Right cardiac atrium (tissue), 5 donors: ENCODE measurements at regions of chr3 and their contacts with region 1.

Region 1: DNA sequence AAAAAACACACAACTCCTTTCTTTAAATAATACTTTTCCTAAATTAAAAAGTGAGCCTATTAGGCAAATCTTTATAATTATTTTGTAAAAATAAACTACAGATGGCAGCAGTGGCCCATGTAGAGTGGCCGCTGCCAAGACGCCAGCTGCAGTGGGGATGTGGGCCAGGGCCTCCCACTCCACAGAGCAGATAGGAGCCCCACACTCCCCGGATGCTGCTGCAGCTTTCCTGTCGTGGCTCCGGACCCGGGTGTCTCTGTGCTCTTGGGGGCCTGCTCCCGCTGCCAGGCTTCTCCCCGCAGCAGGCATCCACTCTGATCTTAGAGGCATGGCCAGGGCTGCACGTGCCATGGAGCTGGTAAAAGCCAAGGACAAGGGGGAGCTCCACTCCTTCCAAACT is 67.5 kb downstream of the PROS1 start:
- DNase-seq: peak; percentile 61 to 89 (median 86)
- ATAC-seq: peak; percentile 77 to 88
- H3K4me3 ChIP-seq: no peak overlapping the region
- H3K27ac ChIP-seq: peak overlapping the region; percentile 29
- H3K4me1 ChIP-seq: no peaks in the 10 kb centered on the region
- H3K27me3 ChIP-seq: no peaks in the 10 kb centered on the region

Region 2: GRCh38 chr3:93855406-93855805 is 50.8 kb before region 1 on chr3:
- intact Hi-C with region 1: no loop called
- DNase-seq: no peak
- ATAC-seq: no peak
- H3K4me3 ChIP-seq: no peak overlapping the region
- H3K27ac ChIP-seq: no peak overlapping the region
- H3K4me1 ChIP-seq: no peaks in the 10 kb centered on the region
- H3K27me3 ChIP-seq: no peaks in the 10 kb centered on the region

Region 3: DNA sequence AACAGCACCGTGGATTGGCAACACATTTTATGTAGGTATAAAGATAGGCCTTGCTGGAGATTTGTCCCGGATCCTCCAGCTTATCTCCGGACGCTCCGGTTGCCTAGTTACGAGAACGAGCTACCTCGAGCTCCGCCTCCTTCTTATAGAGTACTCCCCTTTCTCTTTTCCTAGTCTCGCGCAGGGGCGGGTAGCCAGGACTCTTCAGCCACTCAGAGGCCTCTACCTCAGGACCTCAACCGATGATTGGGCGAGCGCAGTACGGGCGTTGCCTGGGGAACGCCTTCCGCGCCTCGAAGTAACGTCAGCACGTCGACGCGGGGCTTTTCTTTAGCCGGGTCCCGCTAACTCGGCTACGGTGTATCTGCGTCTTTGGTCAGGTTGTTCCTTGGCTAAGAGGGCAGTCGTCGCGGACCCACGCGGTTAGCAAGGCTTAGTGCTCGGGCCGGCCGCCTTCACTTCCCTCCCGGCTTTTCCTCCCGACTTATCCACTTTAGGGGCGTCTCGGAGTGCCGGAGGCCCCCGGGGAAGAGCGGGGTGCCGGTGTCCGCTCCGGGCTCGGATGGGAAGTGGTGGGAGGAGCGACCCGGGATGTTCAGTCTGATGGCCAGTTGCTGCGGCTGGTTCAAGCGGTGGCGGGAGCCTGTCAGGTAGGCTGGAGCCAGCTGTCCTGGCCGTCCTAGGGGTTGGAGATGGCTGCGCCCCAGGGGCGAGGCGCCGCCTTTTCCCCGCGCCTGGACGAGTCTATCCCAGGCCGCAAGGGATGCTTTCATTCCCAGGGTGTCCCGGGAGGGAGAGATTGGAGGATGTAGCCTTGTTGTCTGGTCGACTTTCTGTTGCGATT is 73.8 kb after region 1 on chr3 and contains the start of gene ARL13B:
- intact Hi-C with region 1: loop called in 1 of 4 experiments (anchors 10 kb)
- DNase-seq: peak; percentile 99
- ATAC-seq: peak; percentile 100
- H3K4me3 ChIP-seq: peak within 1 kb of the TSS; percentile 79
- H3K27ac ChIP-seq: peak within 1 kb of the TSS; percentile 95
- H3K4me1 ChIP-seq: no peaks in the 10 kb centered on the region
- H3K27me3 ChIP-seq: no peaks in the 10 kb centered on the region
- total RNA-seq, gene ARL13B: 5.9 to 10.1 (median 7.6) TPM

Region 4: DNA sequence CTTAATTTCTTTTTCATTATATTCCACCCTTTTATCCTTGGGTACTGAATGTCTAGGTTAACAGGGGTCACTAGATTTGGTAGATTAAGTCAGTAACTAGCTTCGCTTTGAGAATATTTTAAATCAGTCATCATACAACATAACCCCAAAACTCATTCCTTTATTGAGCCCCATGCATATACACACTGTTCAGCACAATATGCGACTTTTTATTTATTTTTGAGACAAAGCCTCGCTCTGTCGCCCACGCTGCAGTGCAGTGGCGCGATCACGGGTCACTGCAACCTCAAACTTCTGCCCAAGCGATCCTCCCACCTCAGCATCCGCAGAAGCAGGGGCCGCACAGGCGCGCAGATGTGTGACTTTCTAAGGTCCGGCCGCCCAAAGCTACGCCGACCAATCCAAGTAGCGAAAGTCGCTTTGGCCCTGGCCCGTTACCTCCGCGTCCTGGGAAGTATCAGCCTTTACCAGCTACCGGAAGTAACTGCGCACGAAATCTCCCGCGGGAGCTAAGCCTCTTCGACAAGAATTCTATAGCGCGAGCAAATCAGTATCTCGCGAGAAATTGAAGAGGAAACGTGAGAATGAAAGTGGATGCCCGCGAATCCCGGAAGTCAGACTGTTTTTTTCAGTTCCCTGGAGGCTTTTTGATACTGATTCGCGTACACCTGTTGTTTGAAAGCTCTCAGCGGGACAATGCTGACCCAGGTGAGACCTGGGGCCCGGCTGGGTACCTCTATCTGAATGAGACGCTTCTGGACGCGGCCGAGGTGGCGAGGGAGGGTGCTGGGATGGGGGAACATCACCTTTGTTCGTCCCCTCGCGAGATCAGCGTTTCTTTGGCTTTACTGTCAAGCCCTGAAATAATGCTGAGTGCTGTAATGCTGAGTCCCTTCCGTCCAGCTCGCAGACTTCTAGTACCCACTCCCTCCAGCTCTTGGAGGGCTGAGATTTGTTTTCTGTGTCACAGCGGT is 156.5 kb after region 1 on chr3 and contains the starts of genes DHFR2 and NSUN3:
- intact Hi-C with region 1: loop called in 3 of 4 experiments (anchors 5 to 10 kb)
- DNase-seq: peak; percentile 96 to 97 (median 96)
- ATAC-seq: peak; percentile 98 to 99
- H3K4me3 ChIP-seq: peak within 1 kb of the TSS; percentile 77
- H3K27ac ChIP-seq: peak within 1 kb of the TSS; percentile 86
- H3K4me1 ChIP-seq: no peaks in the 10 kb centered on the region
- H3K27me3 ChIP-seq: no peaks in the 10 kb centered on the region
- total RNA-seq, gene DHFR2: 3.5 to 5.7 (median 4.2) TPM
- total RNA-seq, gene NSUN3: 6.4 to 9.0 (median 7.4) TPM

Region 5: GRCh38 chr3:94069194-94069813 is 163.1 kb after region 1 on chr3:
- intact Hi-C with region 1: loop called in 3 of 4 experiments (anchors 5 to 10 kb)
- DNase-seq: no peak
- ATAC-seq: no peak
- H3K4me3 ChIP-seq: no peak overlapping the region
- H3K27ac ChIP-seq: no peak overlapping the region
- H3K4me1 ChIP-seq: no peaks in the 10 kb centered on the region
- H3K27me3 ChIP-seq: no peaks in the 10 kb centered on the region